Endothelial cell of umbilical vein (primary cell): ENCODE measurements at regions of chr1 and their contacts with region 1.

Region 1: DNA sequence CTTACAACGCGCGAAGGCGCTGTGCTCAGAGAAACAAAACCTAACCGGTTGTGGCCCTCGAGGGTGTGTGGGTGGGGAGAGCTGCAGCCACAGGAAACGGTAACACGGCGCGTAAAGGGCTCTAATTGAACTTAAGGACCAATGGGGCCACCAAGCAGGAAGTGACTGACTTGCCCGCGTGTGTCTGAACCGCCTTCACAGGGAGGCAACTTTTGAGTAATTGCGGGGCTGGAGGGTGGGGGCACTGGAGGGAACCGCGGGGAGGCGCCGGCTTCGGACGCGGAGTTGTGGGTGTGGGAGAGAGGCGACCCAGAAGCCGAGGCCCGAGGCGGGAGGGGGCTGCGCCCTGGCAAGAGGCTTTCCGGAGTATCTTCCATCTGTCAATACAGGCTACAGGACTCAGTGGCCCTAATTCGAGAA is 577 bp upstream of the PNRC2 start:
- DNase-seq: peak; percentile 93
- H3K4me3 ChIP-seq: peak overlapping the region; percentile 43 to 67 (median 58)
- H3K27ac ChIP-seq: peak overlapping the region; percentile 96
- H3K4me1 ChIP-seq: peaks cover 26% of the 10 kb centered on the region
- H3K27me3 ChIP-seq: no peaks in the 10 kb centered on the region
- CTCF ChIP-seq: peak; percentile 17 to 38
- POLR2A ChIP-seq: peak; percentile 13

Region 2: GRCh38 chr1:23825076-23825761 is 133.8 kb before region 1 on chr1 and contains the start of gene HMGCL:
- CTCF ChIA-PET with region 1: no interaction called
- POLR2A ChIA-PET with region 1: no interaction called
- dilution Hi-C with region 1: no loop called
- intact Hi-C with region 1: loop called (anchors 5 kb)
- DNase-seq: peak; percentile 91
- H3K4me3 ChIP-seq: peak within 1 kb of the TSS; percentile 91 to 99 (median 99)
- H3K27ac ChIP-seq: peak within 1 kb of the TSS; percentile 76
- H3K4me1 ChIP-seq: peaks cover 9% of the 10 kb centered on the region
- H3K27me3 ChIP-seq: no peaks in the 10 kb centered on the region
- CTCF ChIP-seq: no peak
- POLR2A ChIP-seq: peak; percentile 95
- total RNA-seq, gene HMGCL: 23.9 and 24.2 TPM in 2 replicates

Region 3: GRCh38 chr1:23979878-23980724 is 21.1 kb after region 1 on chr1 and contains the start of gene SRSF10:
- CTCF ChIA-PET with region 1: interaction called, 4 read pairs
- POLR2A ChIA-PET with region 1: interaction called, 3 read pairs
- dilution Hi-C with region 1: no loop called
- intact Hi-C with region 1: loop called (anchors 1 kb)
- DNase-seq: peak; percentile 99
- H3K4me3 ChIP-seq: peak within 1 kb of the TSS; percentile 79 to 100 (median 85)
- H3K27ac ChIP-seq: peak within 1 kb of the TSS; percentile 94
- H3K4me1 ChIP-seq: peaks cover 46% of the 10 kb centered on the region
- H3K27me3 ChIP-seq: no peaks in the 10 kb centered on the region
- CTCF ChIP-seq: peak in 1 of 2 donors; percentile 39
- POLR2A ChIP-seq: peak; percentile 98
- total RNA-seq, gene SRSF10: 124 and 125 TPM in 2 replicates

Region 4: GRCh38 chr1:24027838-24028468 is 68.9 kb after region 1 on chr1:
- CTCF ChIA-PET with region 1: interaction called, 42 read pairs
- POLR2A ChIA-PET with region 1: no interaction called
- dilution Hi-C with region 1: no loop called
- intact Hi-C with region 1: loop called (anchors 1 kb)
- DNase-seq: peak; percentile 70
- H3K4me3 ChIP-seq: no peak overlapping the region
- H3K27ac ChIP-seq: no peak overlapping the region
- H3K4me1 ChIP-seq: no peaks in the 10 kb centered on the region
- H3K27me3 ChIP-seq: no peaks in the 10 kb centered on the region
- CTCF ChIP-seq: peak; percentile 37 to 45
- POLR2A ChIP-seq: no peak

Region 5: GRCh38 chr1:24137031-24137430 is 178.0 kb after region 1 on chr1:
- CTCF ChIA-PET with region 1: no interaction called
- POLR2A ChIA-PET with region 1: no interaction called
- dilution Hi-C with region 1: no loop called
- intact Hi-C with region 1: no loop called
- DNase-seq: no peak
- H3K4me3 ChIP-seq: no peak overlapping the region
- H3K27ac ChIP-seq: no peak overlapping the region
- H3K4me1 ChIP-seq: no peaks in the 10 kb centered on the region
- H3K27me3 ChIP-seq: peaks cover 3 to 5% of the 10 kb centered on the region in 2 experiments
- CTCF ChIP-seq: no peak
- POLR2A ChIP-seq: no peak

Region 6: GRCh38 chr1:24727501-24728216 is 768.6 kb after region 1 on chr1:
- CTCF ChIA-PET with region 1: no interaction called
- POLR2A ChIA-PET with region 1: no interaction called
- dilution Hi-C with region 1: no loop called
- intact Hi-C with region 1: loop called (anchors 5 kb)
- DNase-seq: no peak
- H3K4me3 ChIP-seq: no peak overlapping the region
- H3K27ac ChIP-seq: no peak overlapping the region
- H3K4me1 ChIP-seq: peaks cover 45% of the 10 kb centered on the region
- H3K27me3 ChIP-seq: no peaks in the 10 kb centered on the region
- CTCF ChIP-seq: no peak
- POLR2A ChIP-seq: no peak